ENCODE measurements at regions of chr6 and their contacts with region 1.

Region 1: GRCh38 chr6:143507358-143508145 is 4.0 kb downstream of the FUCA2 start:
- DNase-seq: peak; percentile 32
- H3K4me3 ChIP-seq: no peak overlapping the region
- H3K27ac ChIP-seq: no peak overlapping the region
- H3K4me1 ChIP-seq: peaks cover 11% of the 10 kb centered on the region
- CTCF ChIP-seq: no peak

Region 2: GRCh38 chr6:142474531-142475289 is 1032.8 kb before region 1 on chr6:
- CTCF ChIA-PET with region 1: no interaction called
- POLR2A ChIA-PET with region 1: no interaction called
- intact Hi-C with region 1: loop called (anchors 10 kb)
- DNase-seq: peak; percentile 47
- H3K4me3 ChIP-seq: no peak overlapping the region
- H3K27ac ChIP-seq: no peak overlapping the region
- H3K4me1 ChIP-seq: no peaks in the 10 kb centered on the region
- CTCF ChIP-seq: peak; percentile 96

Region 3: DNA sequence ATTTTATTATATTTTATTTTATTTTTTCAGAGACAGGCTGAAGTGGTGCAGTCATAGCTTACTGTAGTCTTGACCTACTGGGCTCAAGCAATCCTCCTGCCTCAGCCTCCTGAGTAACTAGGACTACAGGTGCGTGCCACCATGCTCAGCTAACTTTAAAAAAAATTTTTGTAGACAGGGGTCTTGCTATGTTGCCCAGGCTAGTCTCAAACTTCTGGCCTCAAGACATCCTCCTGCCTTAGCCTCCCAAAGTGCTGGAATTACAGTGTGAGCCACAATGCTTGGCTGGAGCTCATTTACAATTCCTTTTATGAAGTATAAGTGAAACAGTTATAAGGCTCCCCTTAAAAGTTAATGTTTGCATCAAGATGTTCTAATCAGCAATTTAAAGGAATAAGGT is 10.6 kb before region 1 on chr6:
- CTCF ChIA-PET with region 1: no interaction called
- POLR2A ChIA-PET with region 1: interaction called, 11 read pairs
- intact Hi-C with region 1: no loop called
- DNase-seq: no peak
- H3K4me3 ChIP-seq: no peak overlapping the region
- H3K27ac ChIP-seq: no peak overlapping the region
- H3K4me1 ChIP-seq: no peaks in the 10 kb centered on the region
- CTCF ChIP-seq: no peak

Measured in OCI-LY7 (cell line).